ENCODE measurements at regions of chr9 and their contacts with region 1.

Region 1: GRCh38 chr9:75071530-75072124 is 16.3 kb downstream of the NMRK1 start:
- DNase-seq: peak; percentile 81
- H3K4me3 Mint-ChIP-seq: no peak overlapping the region
- H3K27ac Mint-ChIP-seq: peak overlapping the region; percentile 77
- H3K4me1 Mint-ChIP-seq: peaks cover 13% of the 10 kb centered on the region
- H3K27me3 Mint-ChIP-seq: no peaks in the 10 kb centered on the region
- CTCF ChIP-seq: no peak

Region 2: GRCh38 chr9:74415995-74416394 is 655.6 kb before region 1 on chr9:
- CTCF ChIA-PET with region 1: no interaction called
- POLR2A ChIA-PET with region 1: no interaction called
- intact Hi-C with region 1: no loop called
- DNase-seq: no peak
- H3K4me3 Mint-ChIP-seq: no peak overlapping the region
- H3K27ac Mint-ChIP-seq: no peak overlapping the region
- H3K4me1 Mint-ChIP-seq: no peaks in the 10 kb centered on the region
- H3K27me3 Mint-ChIP-seq: no peaks in the 10 kb centered on the region
- CTCF ChIP-seq: no peak

Region 3: DNA sequence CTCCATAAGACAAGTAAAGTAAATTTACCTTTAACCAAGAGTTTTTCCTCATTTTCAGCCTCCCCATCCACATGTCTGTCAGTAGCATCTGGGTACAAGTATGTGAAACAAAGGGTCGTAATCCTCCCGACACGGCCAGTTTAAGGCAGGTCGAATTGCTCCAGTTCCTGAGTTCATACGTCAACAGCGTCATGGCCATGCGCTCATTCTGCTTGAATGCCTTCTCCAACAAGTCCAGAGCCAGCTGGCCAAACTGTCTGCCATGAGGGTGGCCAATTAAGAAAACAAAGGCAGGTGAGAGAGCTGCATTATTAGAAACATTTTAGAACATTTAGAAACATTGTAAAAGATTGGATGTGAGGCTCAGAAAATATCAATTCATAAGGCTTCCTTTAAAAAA is 271.4 kb before region 1 on chr9:
- CTCF ChIA-PET with region 1: no interaction called
- POLR2A ChIA-PET with region 1: no interaction called
- intact Hi-C with region 1: no loop called
- DNase-seq: no peak
- H3K4me3 Mint-ChIP-seq: no peak overlapping the region
- H3K27ac Mint-ChIP-seq: no peak overlapping the region
- H3K4me1 Mint-ChIP-seq: peaks cover 13% of the 10 kb centered on the region
- H3K27me3 Mint-ChIP-seq: no peaks in the 10 kb centered on the region
- CTCF ChIP-seq: no peak

Region 4: DNA sequence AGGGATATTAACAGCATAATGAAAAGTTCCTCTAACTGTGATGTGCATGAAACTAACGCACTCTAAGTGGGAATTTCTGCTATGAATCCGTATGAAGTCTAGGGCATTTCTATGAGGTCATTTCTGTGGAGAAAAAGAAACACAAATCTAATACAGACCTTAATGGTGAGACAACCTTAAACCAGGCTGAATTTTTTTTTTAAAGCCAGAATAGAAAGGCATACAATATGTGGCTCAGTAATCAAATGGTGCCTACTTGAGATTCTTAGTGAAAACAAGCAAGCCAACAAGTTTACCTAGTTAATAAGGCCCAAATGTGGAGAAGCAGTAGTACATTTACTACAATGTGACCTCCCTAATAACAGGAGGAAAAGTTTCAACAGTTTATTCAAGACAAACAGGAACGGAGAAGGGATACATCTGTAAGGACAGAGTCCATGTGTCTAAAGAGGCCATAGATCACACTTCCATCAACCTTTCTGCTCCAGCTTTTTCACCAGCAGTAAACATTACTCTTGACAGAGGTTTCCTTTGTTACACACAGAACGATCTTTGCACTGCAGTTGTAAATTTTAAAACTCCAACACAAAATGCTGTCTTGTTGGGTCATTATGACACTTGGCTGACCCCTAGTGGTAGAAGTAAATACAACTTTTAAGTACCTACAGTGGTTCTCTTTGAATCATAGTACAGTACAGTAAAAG is 69.8 kb before region 1 on chr9:
- CTCF ChIA-PET with region 1: interaction called, 16 read pairs
- POLR2A ChIA-PET with region 1: interaction called, 4 read pairs
- intact Hi-C with region 1: loop called (anchors 5 kb)
- DNase-seq: peak; percentile 82
- H3K4me3 Mint-ChIP-seq: no peak overlapping the region
- H3K27ac Mint-ChIP-seq: no peak overlapping the region
- H3K4me1 Mint-ChIP-seq: no peaks in the 10 kb centered on the region
- H3K27me3 Mint-ChIP-seq: no peaks in the 10 kb centered on the region
- CTCF ChIP-seq: peak; percentile 68